ENCODE measurements at regions of chr13 and their contacts with region 1.

Region 1: GRCh38 chr13:76903544-76904162 is 17.4 kb upstream of the KCTD12 start:
- DNase-seq: peak; percentile 42 to 49
- H3K4me3 ChIP-seq: no peak overlapping the region
- H3K27ac ChIP-seq: no peak overlapping the region
- H3K4me1 ChIP-seq: no peaks in the 10 kb centered on the region
- H3K27me3 ChIP-seq: no peaks in the 10 kb centered on the region
- CTCF ChIP-seq: peak; percentile 96

Region 2: DNA sequence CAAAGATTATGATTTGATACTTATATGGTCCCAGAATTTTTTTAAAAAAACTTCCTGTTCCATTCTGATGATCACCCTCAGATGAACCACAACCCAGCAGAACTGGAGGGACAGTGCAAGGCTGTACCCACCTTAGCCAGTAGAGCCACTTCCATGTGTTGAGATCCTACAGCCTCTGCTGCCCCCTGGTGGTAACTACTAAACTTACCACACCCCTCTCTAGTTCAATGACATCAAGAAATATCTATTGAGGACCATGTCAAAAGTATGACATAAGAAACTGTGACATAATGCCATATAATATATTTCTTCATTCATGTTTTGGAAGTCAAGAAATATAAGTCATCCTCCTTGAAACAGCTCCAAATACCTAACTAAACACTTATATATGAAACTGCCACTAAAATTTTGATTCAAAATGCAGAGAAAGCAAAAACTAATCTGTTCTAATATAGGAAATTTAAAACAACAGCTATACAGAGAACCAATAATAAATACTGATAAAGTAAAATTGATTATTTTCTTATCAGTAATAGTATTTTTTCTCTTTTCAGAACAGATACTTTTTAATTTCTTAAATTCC is 430.0 kb before region 1 on chr13:
- CTCF ChIA-PET with region 1: no interaction called
- POLR2A ChIA-PET with region 1: no interaction called
- intact Hi-C with region 1: loop called (anchors 5 kb)
- DNase-seq: peak; percentile 48 to 68
- H3K4me3 ChIP-seq: no peak overlapping the region
- H3K27ac ChIP-seq: no peak overlapping the region
- H3K4me1 ChIP-seq: no peaks in the 10 kb centered on the region
- H3K27me3 ChIP-seq: no peaks in the 10 kb centered on the region
- CTCF ChIP-seq: peak; percentile 94

Region 3: GRCh38 chr13:76637641-76638141 is 266.0 kb before region 1 on chr13:
- CTCF ChIA-PET with region 1: no interaction called
- POLR2A ChIA-PET with region 1: no interaction called
- intact Hi-C with region 1: no loop called
- DNase-seq: no peak
- H3K4me3 ChIP-seq: no peak overlapping the region
- H3K27ac ChIP-seq: no peak overlapping the region
- H3K4me1 ChIP-seq: no peaks in the 10 kb centered on the region
- H3K27me3 ChIP-seq: no peaks in the 10 kb centered on the region
- CTCF ChIP-seq: no peak

Region 4: GRCh38 chr13:76976490-76976889 is 72.8 kb after region 1 on chr13:
- CTCF ChIA-PET with region 1: no interaction called
- POLR2A ChIA-PET with region 1: no interaction called
- intact Hi-C with region 1: loop called (anchors 10 kb)
- DNase-seq: peak; percentile 28 to 78
- H3K4me3 ChIP-seq: no peak overlapping the region
- H3K27ac ChIP-seq: no peak overlapping the region
- H3K4me1 ChIP-seq: peaks cover 14% of the 10 kb centered on the region
- H3K27me3 ChIP-seq: peaks cover 12% of the 10 kb centered on the region
- CTCF ChIP-seq: no peak

Measured in PC-9 (cell line).